ENCODE measurements at regions of chr11 and their contacts with region 1.

Region 1: GRCh38 chr11:8263769-8264410 is at the start of gene LMO1:
- DNase-seq: peak; percentile 83
- ATAC-seq: peak; percentile 80
- H3K4me3 ChIP-seq: peak within 1 kb of the TSS; percentile 32 to 55 (median 51)
- H3K4me3 Mint-ChIP-seq: peak within 1 kb of the TSS; percentile 82
- H3K27ac ChIP-seq: no peak within 1 kb of the TSS
- H3K27ac Mint-ChIP-seq: no peak within 1 kb of the TSS
- H3K4me1 ChIP-seq: peaks cover 21 to 27% of the 10 kb centered on the region in 2 donors
- H3K4me1 Mint-ChIP-seq: peaks cover 17% of the 10 kb centered on the region
- H3K27me3 ChIP-seq: peaks cover 0 to 72% (median 33%) of the 10 kb centered on the region in 4 experiments
- H3K27me3 Mint-ChIP-seq: peaks cover 60% of the 10 kb centered on the region
- CTCF ChIP-seq: peak; percentile 85
- total RNA-seq, gene LMO1: not detected in 2 replicates

Region 2: GRCh38 chr11:7945291-7945690 is 318.6 kb before region 1 on chr11:
- CTCF ChIA-PET with region 1: no interaction called
- POLR2A ChIA-PET with region 1: no interaction called
- intact Hi-C with region 1: no loop called
- DNase-seq: no peak
- ATAC-seq: no peak
- H3K4me3 ChIP-seq: no peak overlapping the region
- H3K4me3 Mint-ChIP-seq: no peak overlapping the region
- H3K27ac ChIP-seq: no peak overlapping the region
- H3K27ac Mint-ChIP-seq: no peak overlapping the region
- H3K4me1 ChIP-seq: no peaks in the 10 kb centered on the region
- H3K4me1 Mint-ChIP-seq: no peaks in the 10 kb centered on the region
- H3K27me3 ChIP-seq: peaks cover 0 to 5% (median 1%) of the 10 kb centered on the region in 4 experiments
- H3K27me3 Mint-ChIP-seq: peaks cover 36% of the 10 kb centered on the region
- CTCF ChIP-seq: no peak

Region 3: DNA sequence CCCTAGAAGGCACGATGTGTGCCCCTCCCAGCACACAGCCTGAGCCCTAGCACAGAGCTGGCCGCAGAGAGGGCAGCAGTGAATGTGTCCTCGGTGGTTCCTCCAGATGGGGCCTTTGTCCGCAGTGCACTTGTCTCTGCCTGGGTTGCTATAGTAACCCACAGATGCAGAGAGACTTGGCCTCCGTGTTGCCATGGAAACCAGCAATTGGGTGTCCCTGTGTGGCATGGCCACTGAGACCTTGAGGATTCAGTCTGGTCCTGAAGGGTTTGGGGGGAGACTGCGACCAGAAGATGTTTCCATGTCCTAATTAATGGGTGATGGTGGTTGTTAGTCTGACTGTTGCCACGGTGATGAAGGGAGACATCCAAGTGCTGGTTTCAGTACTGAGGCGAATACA is 225.5 kb before region 1 on chr11:
- CTCF ChIA-PET with region 1: no interaction called
- POLR2A ChIA-PET with region 1: no interaction called
- intact Hi-C with region 1: no loop called
- DNase-seq: no peak
- ATAC-seq: no peak
- H3K4me3 ChIP-seq: no peak overlapping the region
- H3K4me3 Mint-ChIP-seq: no peak overlapping the region
- H3K27ac ChIP-seq: no peak overlapping the region
- H3K27ac Mint-ChIP-seq: no peak overlapping the region
- H3K4me1 ChIP-seq: peaks cover 0 to 2% of the 10 kb centered on the region in 2 donors
- H3K4me1 Mint-ChIP-seq: peaks cover 2% of the 10 kb centered on the region
- H3K27me3 ChIP-seq: peaks cover 0 to 6% (median under 1%) of the 10 kb centered on the region in 4 experiments
- H3K27me3 Mint-ChIP-seq: peaks cover 40% of the 10 kb centered on the region
- CTCF ChIP-seq: no peak

Region 4: DNA sequence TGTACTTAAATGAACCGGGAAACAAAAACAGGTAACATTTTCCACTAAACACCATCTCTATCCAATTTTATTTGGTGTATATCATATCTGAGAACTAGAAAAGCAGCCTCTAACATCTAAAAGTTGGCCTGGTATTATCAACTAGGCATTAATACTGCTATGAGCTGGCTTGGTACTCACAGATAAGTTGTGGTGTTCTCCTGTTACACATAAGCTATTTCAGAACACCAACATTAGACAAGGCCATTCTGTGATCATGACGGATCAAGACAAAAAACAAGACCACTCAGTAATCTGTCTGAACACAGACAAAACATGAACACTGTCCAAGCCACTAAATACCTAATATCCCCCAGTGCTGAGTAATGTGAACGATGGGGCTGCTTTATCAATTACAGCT is 107.0 kb before region 1 on chr11:
- CTCF ChIA-PET with region 1: no interaction called
- POLR2A ChIA-PET with region 1: no interaction called
- intact Hi-C with region 1: no loop called
- DNase-seq: no peak
- ATAC-seq: no peak
- H3K4me3 ChIP-seq: no peak overlapping the region
- H3K4me3 Mint-ChIP-seq: no peak overlapping the region
- H3K27ac ChIP-seq: no peak overlapping the region
- H3K27ac Mint-ChIP-seq: no peak overlapping the region
- H3K4me1 ChIP-seq: no peaks in the 10 kb centered on the region
- H3K4me1 Mint-ChIP-seq: peaks cover 10% of the 10 kb centered on the region
- H3K27me3 ChIP-seq: no peaks in the 10 kb centered on the region
- H3K27me3 Mint-ChIP-seq: no peaks in the 10 kb centered on the region
- CTCF ChIP-seq: no peak

Region 5: DNA sequence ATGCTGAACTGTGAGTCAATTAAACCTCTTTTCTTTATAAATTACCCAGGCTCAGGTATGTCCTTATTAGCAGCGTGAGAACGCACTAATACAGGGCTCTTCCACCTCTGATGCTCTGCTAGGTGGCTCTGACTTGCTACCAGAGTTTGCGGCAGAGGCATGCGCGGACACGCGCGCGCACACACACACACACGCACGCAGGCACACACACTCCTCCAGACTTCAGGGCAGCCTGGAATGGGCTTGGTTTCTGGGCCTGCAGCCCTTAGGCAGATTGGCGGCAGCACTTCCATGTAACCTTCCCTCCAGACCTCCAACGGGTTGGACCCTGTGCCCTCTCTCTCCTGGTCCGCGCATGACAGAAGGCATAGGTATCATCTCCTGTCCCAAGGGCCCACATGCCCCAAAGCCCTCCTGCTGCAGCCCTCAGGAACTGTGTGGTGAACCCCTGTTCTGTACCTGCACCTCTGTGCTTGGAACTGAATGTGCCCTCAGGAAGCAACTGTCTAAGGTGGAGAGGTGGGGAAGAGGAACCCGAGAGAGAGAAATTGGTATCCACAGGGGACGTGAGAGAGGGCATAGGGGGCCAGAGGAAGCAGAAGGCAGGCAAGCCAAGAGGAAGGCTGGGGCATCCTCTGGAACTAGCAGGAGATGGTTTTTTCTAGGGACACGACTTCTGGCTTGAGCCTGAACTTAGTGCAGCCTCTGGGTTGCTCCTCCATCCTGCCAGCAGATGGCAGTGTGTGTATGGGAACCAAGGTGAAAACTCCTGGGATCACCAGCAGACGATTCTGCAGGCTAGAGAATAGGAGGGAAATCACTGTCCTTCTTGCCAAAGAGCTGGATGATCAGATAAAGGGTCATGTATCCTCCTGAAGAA is 71.6 kb before region 1 on chr11:
- CTCF ChIA-PET with region 1: interaction called, 63 read pairs
- POLR2A ChIA-PET with region 1: no interaction called
- intact Hi-C with region 1: loop called (anchors 1 kb)
- DNase-seq: peak; percentile 78
- ATAC-seq: peak; percentile 81
- H3K4me3 ChIP-seq: no peak overlapping the region
- H3K4me3 Mint-ChIP-seq: no peak overlapping the region
- H3K27ac ChIP-seq: no peak overlapping the region
- H3K27ac Mint-ChIP-seq: no peak overlapping the region
- H3K4me1 ChIP-seq: peaks cover 12 to 15% of the 10 kb centered on the region in 2 donors
- H3K4me1 Mint-ChIP-seq: peaks cover 13% of the 10 kb centered on the region
- H3K27me3 ChIP-seq: peaks cover 0 to 2% (median 0%) of the 10 kb centered on the region in 4 experiments
- H3K27me3 Mint-ChIP-seq: peaks cover 20% of the 10 kb centered on the region
- CTCF ChIP-seq: peak; percentile 94

Region 6: GRCh38 chr11:8201644-8202365 is 62.1 kb before region 1 on chr11:
- CTCF ChIA-PET with region 1: interaction called, 17 read pairs
- POLR2A ChIA-PET with region 1: no interaction called
- intact Hi-C with region 1: no loop called
- DNase-seq: peak; percentile 90
- ATAC-seq: peak; percentile 87
- H3K4me3 ChIP-seq: peak overlapping the region in 1 of 5 experiments; percentile 15
- H3K4me3 Mint-ChIP-seq: peak overlapping the region; percentile 65
- H3K27ac ChIP-seq: peak overlapping the region; percentile 65 to 82
- H3K27ac Mint-ChIP-seq: peak overlapping the region; percentile 87
- H3K4me1 ChIP-seq: peaks cover 62 to 64% of the 10 kb centered on the region in 2 donors
- H3K4me1 Mint-ChIP-seq: peaks cover 63% of the 10 kb centered on the region
- H3K27me3 ChIP-seq: no peaks in the 10 kb centered on the region
- H3K27me3 Mint-ChIP-seq: no peaks in the 10 kb centered on the region
- CTCF ChIP-seq: no peak

Region 7: DNA sequence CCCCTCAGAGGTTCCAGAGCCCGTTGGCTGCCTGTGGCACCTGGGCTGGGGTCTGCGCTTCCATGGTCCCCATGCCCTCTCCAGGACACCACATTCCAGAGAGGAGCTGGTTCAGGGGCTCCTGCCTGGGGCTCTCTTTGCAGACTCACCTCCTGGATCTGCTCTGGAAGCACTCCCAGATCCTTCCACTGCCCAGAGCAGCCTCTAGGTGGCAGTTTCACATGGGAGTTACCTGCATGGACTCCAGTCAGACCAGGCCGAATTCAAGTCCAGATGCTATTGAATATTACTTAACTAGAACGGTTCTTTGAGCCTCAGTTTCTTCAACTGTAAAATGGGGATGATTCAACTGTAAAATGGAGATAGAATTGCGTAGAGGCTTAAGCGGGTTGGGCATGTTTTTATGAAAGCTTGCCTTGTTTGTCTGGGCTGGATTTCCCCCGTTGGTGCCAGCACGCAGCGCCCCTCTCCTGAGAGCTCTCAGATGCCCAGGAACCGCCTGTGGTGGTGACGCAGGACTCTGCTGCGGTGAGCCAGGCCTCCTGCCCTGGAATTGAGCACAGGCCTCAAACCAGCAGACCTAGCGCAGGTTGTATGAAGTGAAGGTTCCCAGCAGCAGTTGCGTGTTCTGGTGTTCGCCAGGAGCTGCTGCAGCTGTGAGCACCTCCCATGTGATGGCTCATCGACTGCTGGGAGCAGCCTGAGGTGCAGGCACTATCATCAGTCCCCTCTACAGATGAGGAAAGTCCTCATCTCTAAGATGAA is 44.5 kb before region 1 on chr11:
- CTCF ChIA-PET with region 1: interaction called, 17 read pairs
- POLR2A ChIA-PET with region 1: no interaction called
- intact Hi-C with region 1: no loop called
- DNase-seq: peak; percentile 26
- ATAC-seq: peak; percentile 51
- H3K4me3 ChIP-seq: no peak overlapping the region
- H3K4me3 Mint-ChIP-seq: no peak overlapping the region
- H3K27ac ChIP-seq: no peak overlapping the region
- H3K27ac Mint-ChIP-seq: no peak overlapping the region
- H3K4me1 ChIP-seq: no peaks in the 10 kb centered on the region
- H3K4me1 Mint-ChIP-seq: no peaks in the 10 kb centered on the region
- H3K27me3 ChIP-seq: no peaks in the 10 kb centered on the region
- H3K27me3 Mint-ChIP-seq: no peaks in the 10 kb centered on the region
- CTCF ChIP-seq: peak; percentile 58

Region 8: DNA sequence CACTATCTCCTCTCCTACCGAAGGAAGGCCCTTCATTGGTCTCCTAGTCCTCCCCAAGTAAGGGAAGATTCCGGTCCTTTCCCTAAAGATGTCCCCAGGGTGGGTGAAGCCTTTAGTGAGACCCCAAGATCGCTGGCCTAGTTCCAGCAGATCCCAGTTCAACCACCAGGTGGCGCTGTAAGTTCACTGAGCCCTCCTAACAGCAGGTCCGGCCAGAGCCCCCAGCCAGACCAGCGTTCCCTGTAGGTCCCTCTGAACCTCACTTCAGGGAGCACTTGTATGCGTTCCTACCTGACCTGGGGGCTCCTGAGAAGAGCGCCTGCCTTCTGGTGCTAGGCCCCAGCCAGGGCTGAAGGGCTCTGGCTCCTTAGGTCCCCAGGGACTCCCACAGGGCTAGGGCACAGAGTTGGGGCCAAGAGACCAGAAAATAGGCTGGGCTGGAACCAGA is 38.3 kb before region 1 on chr11:
- CTCF ChIA-PET with region 1: interaction called, 19 read pairs
- POLR2A ChIA-PET with region 1: no interaction called
- intact Hi-C with region 1: loop called (anchors 1 kb)
- DNase-seq: peak; percentile 80
- ATAC-seq: peak; percentile 66
- H3K4me3 ChIP-seq: no peak overlapping the region
- H3K4me3 Mint-ChIP-seq: no peak overlapping the region
- H3K27ac ChIP-seq: no peak overlapping the region
- H3K27ac Mint-ChIP-seq: no peak overlapping the region
- H3K4me1 ChIP-seq: peaks cover 0 to 6% of the 10 kb centered on the region in 2 donors
- H3K4me1 Mint-ChIP-seq: peaks cover 2% of the 10 kb centered on the region
- H3K27me3 ChIP-seq: no peaks in the 10 kb centered on the region
- H3K27me3 Mint-ChIP-seq: no peaks in the 10 kb centered on the region
- CTCF ChIP-seq: peak; percentile 93

Region 9: DNA sequence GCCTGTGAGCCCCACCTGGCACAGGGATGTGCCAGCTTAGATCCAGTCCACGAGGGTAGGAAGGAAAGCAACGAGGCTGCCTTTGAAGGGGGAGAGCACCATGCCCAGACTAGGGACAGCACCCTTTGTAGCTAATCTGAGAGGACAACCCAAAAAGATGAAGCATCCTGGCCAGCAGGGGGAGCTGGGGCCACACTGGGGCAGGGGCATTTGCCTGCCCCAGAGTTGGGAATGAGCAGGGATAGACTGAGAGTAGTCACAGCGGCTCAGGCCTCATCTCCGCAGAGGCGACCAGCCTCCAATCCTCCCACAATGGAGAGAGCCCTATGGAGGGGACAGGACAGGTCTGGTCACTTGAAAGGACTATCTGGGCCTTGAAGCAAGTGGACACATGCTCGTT is 16.6 kb before region 1 on chr11:
- CTCF ChIA-PET with region 1: interaction called, 36 read pairs
- POLR2A ChIA-PET with region 1: no interaction called
- intact Hi-C with region 1: no loop called
- DNase-seq: no peak
- ATAC-seq: no peak
- H3K4me3 ChIP-seq: no peak overlapping the region
- H3K4me3 Mint-ChIP-seq: no peak overlapping the region
- H3K27ac ChIP-seq: no peak overlapping the region
- H3K27ac Mint-ChIP-seq: no peak overlapping the region
- H3K4me1 ChIP-seq: no peaks in the 10 kb centered on the region
- H3K4me1 Mint-ChIP-seq: no peaks in the 10 kb centered on the region
- H3K27me3 ChIP-seq: peaks cover 0 to 7% (median 0%) of the 10 kb centered on the region in 4 experiments
- H3K27me3 Mint-ChIP-seq: peaks cover 30% of the 10 kb centered on the region
- CTCF ChIP-seq: peak; percentile 51

Region 10: DNA sequence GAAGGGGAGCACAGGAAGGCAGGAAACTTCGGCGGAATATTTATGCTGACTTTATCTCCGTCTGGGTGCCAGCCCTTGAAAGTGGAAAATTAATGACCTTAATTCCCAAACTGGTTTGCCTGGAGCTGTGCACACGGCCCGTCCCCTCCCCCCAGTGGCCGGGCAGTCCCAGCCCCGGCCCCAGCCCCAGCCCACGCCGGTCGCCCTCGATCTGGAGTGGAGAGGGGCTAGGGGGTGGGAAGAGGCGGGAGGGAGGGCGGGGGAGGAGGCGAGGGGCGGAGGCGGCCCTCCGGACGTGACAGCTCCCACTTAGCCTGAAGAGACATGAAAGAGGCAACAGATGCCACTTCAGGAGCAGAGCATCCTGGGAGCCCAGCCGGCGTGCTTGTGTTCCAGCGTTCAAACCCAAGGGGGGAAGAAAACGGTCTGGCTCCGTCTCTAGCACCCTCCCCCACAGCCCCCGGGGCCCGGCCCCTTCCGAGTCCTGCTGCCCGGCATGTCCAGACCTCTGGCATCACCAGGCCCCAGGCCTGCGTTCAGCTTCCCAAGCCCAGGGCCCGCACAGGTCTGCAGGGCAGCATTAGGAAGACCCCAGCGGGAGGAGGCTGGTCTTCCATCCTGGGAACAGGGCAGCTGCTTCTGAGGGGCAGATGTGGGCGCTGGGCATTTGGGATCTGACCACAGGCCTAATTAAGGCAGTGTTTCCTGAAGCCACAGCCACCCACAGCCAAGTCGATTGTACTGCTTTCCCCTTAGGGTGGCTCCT is 19.8 kb after region 1 on chr11:
- CTCF ChIA-PET with region 1: interaction called, 10 read pairs
- POLR2A ChIA-PET with region 1: no interaction called
- intact Hi-C with region 1: no loop called
- DNase-seq: no peak
- ATAC-seq: no peak
- H3K4me3 ChIP-seq: no peak overlapping the region
- H3K4me3 Mint-ChIP-seq: no peak overlapping the region
- H3K27ac ChIP-seq: no peak overlapping the region
- H3K27ac Mint-ChIP-seq: no peak overlapping the region
- H3K4me1 ChIP-seq: no peaks in the 10 kb centered on the region
- H3K4me1 Mint-ChIP-seq: no peaks in the 10 kb centered on the region
- H3K27me3 ChIP-seq: peaks cover 0 to 8% (median 3%) of the 10 kb centered on the region in 4 experiments
- H3K27me3 Mint-ChIP-seq: peaks cover 18% of the 10 kb centered on the region
- CTCF ChIP-seq: no peak

Region 11: GRCh38 chr11:8403310-8403709 is 139.4 kb after region 1 on chr11:
- CTCF ChIA-PET with region 1: no interaction called
- POLR2A ChIA-PET with region 1: no interaction called
- intact Hi-C with region 1: no loop called
- DNase-seq: no peak
- ATAC-seq: no peak
- H3K4me3 ChIP-seq: no peak overlapping the region
- H3K4me3 Mint-ChIP-seq: no peak overlapping the region
- H3K27ac ChIP-seq: no peak overlapping the region
- H3K27ac Mint-ChIP-seq: no peak overlapping the region
- H3K4me1 ChIP-seq: no peaks in the 10 kb centered on the region
- H3K4me1 Mint-ChIP-seq: no peaks in the 10 kb centered on the region
- H3K27me3 ChIP-seq: no peaks in the 10 kb centered on the region
- H3K27me3 Mint-ChIP-seq: no peaks in the 10 kb centered on the region
- CTCF ChIP-seq: no peak

Measured in B cell (primary cell).